Naive thymus-derived CD4-positive, alpha-beta T cell (primary cell): ENCODE measurements at regions of chr7 and their contacts with region 1.

Region 1: GRCh38 chr7:25125137-25125946 is at the start of gene CYCS:
- DNase-seq: peak; percentile 97 to 100 (median 99)
- ATAC-seq: peak; percentile 96
- H3K4me3 ChIP-seq: peak within 1 kb of the TSS; percentile 74
- H3K4me3 Mint-ChIP-seq: peak within 1 kb of the TSS; percentile 88 to 100 (median 100)
- H3K27ac ChIP-seq: peak within 1 kb of the TSS; percentile 93
- H3K27ac Mint-ChIP-seq: peak within 1 kb of the TSS; percentile 98 to 100 (median 100)
- H3K4me1 ChIP-seq: peaks cover 7 to 13% of the 10 kb centered on the region in 2 donors
- H3K4me1 Mint-ChIP-seq: peaks cover 15 to 40% (median 23%) of the 10 kb centered on the region in 7 donors
- H3K27me3 ChIP-seq: no peaks in the 10 kb centered on the region
- H3K27me3 Mint-ChIP-seq: peaks cover 0 to 5% (median 0%) of the 10 kb centered on the region in 5 donors
- total RNA-seq, gene CYCS: 40.4 to 130 (median 114) TPM

Region 2: GRCh38 chr7:23474094-23474828 is 1651.1 kb before region 1 on chr7:
- CTCF ChIA-PET with region 1: no interaction called
- POLR2A ChIA-PET with region 1: no interaction called
- intact Hi-C with region 1: loop called in 1 of 2 experiments (anchors 5 kb)
- DNase-seq: peak in 6 of 9 donors; percentile 13 to 90 (median 26)
- ATAC-seq: peak; percentile 80
- H3K4me3 ChIP-seq: no peak overlapping the region
- H3K4me3 Mint-ChIP-seq: peak overlapping the region; percentile 13 to 85 (median 54)
- H3K27ac ChIP-seq: no peak overlapping the region
- H3K27ac Mint-ChIP-seq: peak overlapping the region in 5 of 9 donors; percentile 21 to 70 (median 69)
- H3K4me1 ChIP-seq: peaks cover 12 to 22% of the 10 kb centered on the region in 2 donors
- H3K4me1 Mint-ChIP-seq: peaks cover 17 to 35% (median 29%) of the 10 kb centered on the region in 7 donors
- H3K27me3 ChIP-seq: peaks cover 78 to 85% of the 10 kb centered on the region in 2 donors
- H3K27me3 Mint-ChIP-seq: peaks cover 67 to 75% (median 70%) of the 10 kb centered on the region in 5 donors

Region 3: GRCh38 chr7:24757353-24758275 is 367.7 kb before region 1 on chr7 and contains the start of gene GSDME:
- CTCF ChIA-PET with region 1: no interaction called
- POLR2A ChIA-PET with region 1: no interaction called
- intact Hi-C with region 1: loop called in 1 of 2 experiments (anchors 1 kb)
- DNase-seq: peak in 7 of 9 donors; percentile 10 to 67 (median 14)
- ATAC-seq: peak; percentile 73
- H3K4me3 ChIP-seq: peak within 1 kb of the TSS; percentile 46
- H3K4me3 Mint-ChIP-seq: peak within 1 kb of the TSS; percentile 74 to 94 (median 84)
- H3K27ac ChIP-seq: no peak within 1 kb of the TSS
- H3K27ac Mint-ChIP-seq: peak within 1 kb of the TSS in 3 of 9 donors; percentile 11 to 43 (median 38)
- H3K4me1 ChIP-seq: peaks cover 5 to 10% of the 10 kb centered on the region in 2 donors
- H3K4me1 Mint-ChIP-seq: peaks cover 9 to 30% (median 24%) of the 10 kb centered on the region in 7 donors
- H3K27me3 ChIP-seq: peaks cover 3 to 7% of the 10 kb centered on the region in 2 donors
- H3K27me3 Mint-ChIP-seq: peaks cover 42 to 67% (median 53%) of the 10 kb centered on the region in 5 donors
- total RNA-seq, gene GSDME: 0.42 to 5.0 (median 0.92) TPM

Region 4: GRCh38 chr7:25083201-25083600 is 42.1 kb before region 1 on chr7:
- CTCF ChIA-PET with region 1: no interaction called
- POLR2A ChIA-PET with region 1: no interaction called
- intact Hi-C with region 1: no loop called
- DNase-seq: no peak
- ATAC-seq: no peak
- H3K4me3 ChIP-seq: no peak overlapping the region
- H3K4me3 Mint-ChIP-seq: no peak overlapping the region
- H3K27ac ChIP-seq: no peak overlapping the region
- H3K27ac Mint-ChIP-seq: no peak overlapping the region
- H3K4me1 ChIP-seq: no peaks in the 10 kb centered on the region
- H3K4me1 Mint-ChIP-seq: peaks cover 0 to 2% (median 0%) of the 10 kb centered on the region in 7 donors
- H3K27me3 ChIP-seq: no peaks in the 10 kb centered on the region
- H3K27me3 Mint-ChIP-seq: peaks cover 0 to 36% (median 5%) of the 10 kb centered on the region in 5 donors

Region 5: GRCh38 chr7:25158966-25159365 is 33.6 kb after region 1 on chr7:
- CTCF ChIA-PET with region 1: no interaction called
- POLR2A ChIA-PET with region 1: no interaction called
- intact Hi-C with region 1: loop called (anchors 2 kb)
- DNase-seq: no peak
- ATAC-seq: no peak
- H3K4me3 ChIP-seq: no peak overlapping the region
- H3K4me3 Mint-ChIP-seq: no peak overlapping the region
- H3K27ac ChIP-seq: no peak overlapping the region
- H3K27ac Mint-ChIP-seq: no peak overlapping the region
- H3K4me1 ChIP-seq: no peaks in the 10 kb centered on the region
- H3K4me1 Mint-ChIP-seq: peaks cover 0 to 5% (median 4%) of the 10 kb centered on the region in 7 donors
- H3K27me3 ChIP-seq: no peaks in the 10 kb centered on the region
- H3K27me3 Mint-ChIP-seq: no peaks in the 10 kb centered on the region

Region 6: GRCh38 chr7:25851332-25852210 is 726.2 kb after region 1 on chr7:
- CTCF ChIA-PET with region 1: no interaction called
- POLR2A ChIA-PET with region 1: no interaction called
- intact Hi-C with region 1: loop called in 1 of 2 experiments (anchors 10 kb)
- DNase-seq: peak in 8 of 9 donors; percentile 43 to 69 (median 62)
- ATAC-seq: peak; percentile 84
- H3K4me3 ChIP-seq: no peak overlapping the region
- H3K4me3 Mint-ChIP-seq: peak overlapping the region; percentile 16 to 85 (median 76)
- H3K27ac ChIP-seq: no peak overlapping the region
- H3K27ac Mint-ChIP-seq: peak overlapping the region in 7 of 9 donors; percentile 5 to 79 (median 74)
- H3K4me1 ChIP-seq: peaks cover 3 to 9% of the 10 kb centered on the region in 2 donors
- H3K4me1 Mint-ChIP-seq: peaks cover 4 to 27% (median 19%) of the 10 kb centered on the region in 7 donors
- H3K27me3 ChIP-seq: peaks cover 29 to 50% of the 10 kb centered on the region in 2 donors
- H3K27me3 Mint-ChIP-seq: peaks cover 43 to 63% (median 59%) of the 10 kb centered on the region in 5 donors